ENCODE measurements at regions of chr3 and their contacts with region 1.

Region 1: GRCh38 chr3:28476194-28476593 is 127.6 kb upstream of the AZI2 start:
- DNase-seq: no peak
- H3K4me3 ChIP-seq: no peak overlapping the region
- H3K27ac ChIP-seq: no peak overlapping the region
- H3K4me1 ChIP-seq: no peaks in the 10 kb centered on the region
- H3K27me3 ChIP-seq: no peaks in the 10 kb centered on the region
- CTCF ChIP-seq: peak; percentile 25 to 70 (median 52)
- POLR2A ChIP-seq: no peak

Region 2: GRCh38 chr3:28279770-28280169 is 196.4 kb before region 1 on chr3:
- intact Hi-C with region 1: no loop called
- DNase-seq: no peak
- H3K4me3 ChIP-seq: no peak overlapping the region
- H3K27ac ChIP-seq: no peak overlapping the region
- H3K4me1 ChIP-seq: no peaks in the 10 kb centered on the region
- H3K27me3 ChIP-seq: no peaks in the 10 kb centered on the region
- CTCF ChIP-seq: no peak
- POLR2A ChIP-seq: no peak

Region 3: DNA sequence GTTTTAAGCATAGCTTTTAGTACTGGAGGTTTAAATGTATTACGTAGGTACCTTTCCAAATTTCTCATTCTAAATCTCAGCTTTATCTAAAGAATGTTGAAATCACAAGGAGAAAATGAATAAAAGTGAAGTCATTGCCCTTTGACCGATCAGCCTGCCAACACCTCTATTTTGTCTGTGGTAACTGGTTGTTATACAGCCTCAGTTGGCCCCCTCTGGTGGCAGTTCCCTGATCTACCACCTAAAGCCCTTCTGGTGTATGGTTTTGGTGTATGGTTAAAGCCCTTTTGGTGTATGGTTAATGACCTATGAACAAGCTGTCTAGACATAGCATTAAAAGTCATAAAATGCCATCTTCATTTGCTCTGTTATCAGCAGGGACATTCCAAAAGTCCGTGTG is 250.6 kb after region 1 on chr3:
- intact Hi-C with region 1: loop called (anchors 10 kb)
- DNase-seq: no peak
- H3K4me3 ChIP-seq: no peak overlapping the region
- H3K27ac ChIP-seq: peak overlapping the region; percentile 54 to 67
- H3K4me1 ChIP-seq: no peaks in the 10 kb centered on the region
- H3K27me3 ChIP-seq: no peaks in the 10 kb centered on the region
- CTCF ChIP-seq: peak in 2 of 4 experiments; percentile 20 to 38
- POLR2A ChIP-seq: no peak

Region 4: GRCh38 chr3:29775340-29775739 is 1299.1 kb after region 1 on chr3:
- intact Hi-C with region 1: loop called (anchors 10 kb)
- DNase-seq: no peak
- H3K4me3 ChIP-seq: no peak overlapping the region
- H3K27ac ChIP-seq: no peak overlapping the region
- H3K4me1 ChIP-seq: no peaks in the 10 kb centered on the region
- H3K27me3 ChIP-seq: no peaks in the 10 kb centered on the region
- CTCF ChIP-seq: no peak
- POLR2A ChIP-seq: no peak